CD4-positive, alpha-beta T cell (primary cell): ENCODE measurements at regions of chr15 and their contacts with region 1.

Region 1: GRCh38 chr15:48285329-48286214 is 45.7 kb upstream of the DUT start:
- DNase-seq: peak in 10 of 14 experiments; percentile 4 to 69 (median 16)
- ATAC-seq: no peak
- H3K4me3 ChIP-seq: no peak overlapping the region
- H3K4me3 Mint-ChIP-seq: no peak overlapping the region
- H3K27ac ChIP-seq: no peak overlapping the region
- H3K27ac Mint-ChIP-seq: no peak overlapping the region
- H3K4me1 ChIP-seq: peaks cover 3% of the 10 kb centered on the region
- H3K4me1 Mint-ChIP-seq: no peaks in the 10 kb centered on the region
- H3K27me3 ChIP-seq: peaks cover 0 to 4% of the 10 kb centered on the region in 2 experiments
- H3K27me3 Mint-ChIP-seq: peaks cover 7% of the 10 kb centered on the region
- CTCF ChIP-seq: peak; percentile 82

Region 2: DNA sequence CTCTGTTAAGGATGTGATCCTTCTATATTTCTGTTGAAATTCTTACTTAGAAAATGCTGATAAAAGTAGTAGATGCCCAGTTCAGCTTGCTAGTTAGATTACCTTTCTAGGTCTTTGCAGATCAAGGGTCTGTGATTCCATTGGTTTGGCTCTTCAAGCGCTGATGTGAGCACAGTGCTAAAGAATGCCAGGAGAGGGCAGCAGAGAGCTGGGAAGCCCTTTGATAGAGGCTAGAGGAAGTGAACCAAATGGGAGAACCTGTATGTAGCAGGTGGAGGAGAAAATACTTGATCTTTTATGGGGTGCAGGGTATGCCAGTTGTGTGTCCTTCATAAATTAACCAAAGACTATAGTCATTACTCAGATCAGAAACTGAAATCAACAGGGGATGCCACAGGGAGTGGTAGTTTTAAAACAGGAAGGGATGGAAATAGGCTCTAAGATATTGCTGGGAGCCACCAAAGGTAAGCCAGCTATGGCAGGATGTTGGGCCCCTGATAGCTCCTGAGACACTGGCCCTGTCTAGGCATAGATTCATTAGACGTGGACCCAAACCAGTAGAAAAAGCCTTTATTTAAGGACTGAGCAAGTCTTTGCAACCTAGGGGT is 1973.3 kb before region 1 on chr15:
- CTCF ChIA-PET with region 1: no interaction called
- POLR2A ChIA-PET with region 1: no interaction called
- intact Hi-C with region 1: loop called in 1 of 2 experiments (anchors 5 kb)
- DNase-seq: peak; percentile 17 to 61 (median 27)
- ATAC-seq: peak; percentile 49
- H3K4me3 ChIP-seq: no peak overlapping the region
- H3K4me3 Mint-ChIP-seq: no peak overlapping the region
- H3K27ac ChIP-seq: no peak overlapping the region
- H3K27ac Mint-ChIP-seq: no peak overlapping the region
- H3K4me1 ChIP-seq: no peaks in the 10 kb centered on the region
- H3K4me1 Mint-ChIP-seq: no peaks in the 10 kb centered on the region
- H3K27me3 ChIP-seq: no peaks in the 10 kb centered on the region
- H3K27me3 Mint-ChIP-seq: no peaks in the 10 kb centered on the region
- CTCF ChIP-seq: peak; percentile 72

Region 3: GRCh38 chr15:47196057-47196456 is 1089.5 kb before region 1 on chr15:
- CTCF ChIA-PET with region 1: no interaction called
- POLR2A ChIA-PET with region 1: no interaction called
- intact Hi-C with region 1: loop called in 1 of 2 experiments (anchors 5 kb)
- DNase-seq: peak in 12 of 14 experiments; percentile 2 to 55 (median 25)
- ATAC-seq: no peak
- H3K4me3 ChIP-seq: no peak overlapping the region
- H3K4me3 Mint-ChIP-seq: no peak overlapping the region
- H3K27ac ChIP-seq: no peak overlapping the region
- H3K27ac Mint-ChIP-seq: no peak overlapping the region
- H3K4me1 ChIP-seq: no peaks in the 10 kb centered on the region
- H3K4me1 Mint-ChIP-seq: no peaks in the 10 kb centered on the region
- H3K27me3 ChIP-seq: no peaks in the 10 kb centered on the region
- H3K27me3 Mint-ChIP-seq: no peaks in the 10 kb centered on the region
- CTCF ChIP-seq: no peak

Region 4: DNA sequence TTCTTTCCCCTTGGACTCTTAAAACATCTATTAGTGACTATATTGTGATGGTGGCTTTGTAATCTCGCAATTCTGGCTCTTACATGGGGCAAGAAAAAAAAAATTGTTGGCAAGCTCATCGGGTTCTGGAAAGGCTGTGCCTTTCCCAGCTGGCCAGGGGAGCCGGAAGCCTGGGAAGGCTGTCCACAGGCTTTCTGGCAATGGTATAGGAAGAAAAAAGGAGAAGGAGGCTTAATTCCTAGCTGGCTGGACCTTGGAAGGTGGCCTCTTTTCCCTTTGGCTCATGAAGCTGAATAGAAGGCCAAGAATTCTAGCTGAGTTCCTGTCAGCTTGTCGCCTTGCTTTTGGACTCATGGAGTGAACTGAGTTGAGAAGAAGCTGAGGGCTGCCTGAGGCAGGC is 811.7 kb before region 1 on chr15:
- CTCF ChIA-PET with region 1: no interaction called
- POLR2A ChIA-PET with region 1: no interaction called
- intact Hi-C with region 1: loop called in 1 of 2 experiments (anchors 5 kb)
- DNase-seq: no peak
- ATAC-seq: no peak
- H3K4me3 ChIP-seq: no peak overlapping the region
- H3K4me3 Mint-ChIP-seq: no peak overlapping the region
- H3K27ac ChIP-seq: no peak overlapping the region
- H3K27ac Mint-ChIP-seq: no peak overlapping the region
- H3K4me1 ChIP-seq: no peaks in the 10 kb centered on the region
- H3K4me1 Mint-ChIP-seq: no peaks in the 10 kb centered on the region
- H3K27me3 ChIP-seq: no peaks in the 10 kb centered on the region
- H3K27me3 Mint-ChIP-seq: no peaks in the 10 kb centered on the region
- CTCF ChIP-seq: no peak

Region 5: GRCh38 chr15:48112242-48112641 is 173.3 kb before region 1 on chr15:
- CTCF ChIA-PET with region 1: no interaction called
- POLR2A ChIA-PET with region 1: no interaction called
- intact Hi-C with region 1: loop called in 1 of 2 experiments (anchors 10 kb)
- DNase-seq: no peak
- ATAC-seq: no peak
- H3K4me3 ChIP-seq: no peak overlapping the region
- H3K4me3 Mint-ChIP-seq: no peak overlapping the region
- H3K27ac ChIP-seq: no peak overlapping the region
- H3K27ac Mint-ChIP-seq: no peak overlapping the region
- H3K4me1 ChIP-seq: no peaks in the 10 kb centered on the region
- H3K4me1 Mint-ChIP-seq: no peaks in the 10 kb centered on the region
- H3K27me3 ChIP-seq: peaks cover 0 to 4% of the 10 kb centered on the region in 2 experiments
- H3K27me3 Mint-ChIP-seq: peaks cover 47% of the 10 kb centered on the region
- CTCF ChIP-seq: no peak